Right cardiac atrium (tissue), 5 donors: ENCODE measurements at regions of chr12 and their contacts with region 1.

Region 1: GRCh38 chr12:109182041-109182839 is 65.9 kb downstream of the ACACB start:
- DNase-seq: no peak
- ATAC-seq: no peak
- H3K4me3 ChIP-seq: no peak overlapping the region
- H3K27ac ChIP-seq: no peak overlapping the region
- H3K4me1 ChIP-seq: no peaks in the 10 kb centered on the region
- H3K27me3 ChIP-seq: no peaks in the 10 kb centered on the region

Region 2: DNA sequence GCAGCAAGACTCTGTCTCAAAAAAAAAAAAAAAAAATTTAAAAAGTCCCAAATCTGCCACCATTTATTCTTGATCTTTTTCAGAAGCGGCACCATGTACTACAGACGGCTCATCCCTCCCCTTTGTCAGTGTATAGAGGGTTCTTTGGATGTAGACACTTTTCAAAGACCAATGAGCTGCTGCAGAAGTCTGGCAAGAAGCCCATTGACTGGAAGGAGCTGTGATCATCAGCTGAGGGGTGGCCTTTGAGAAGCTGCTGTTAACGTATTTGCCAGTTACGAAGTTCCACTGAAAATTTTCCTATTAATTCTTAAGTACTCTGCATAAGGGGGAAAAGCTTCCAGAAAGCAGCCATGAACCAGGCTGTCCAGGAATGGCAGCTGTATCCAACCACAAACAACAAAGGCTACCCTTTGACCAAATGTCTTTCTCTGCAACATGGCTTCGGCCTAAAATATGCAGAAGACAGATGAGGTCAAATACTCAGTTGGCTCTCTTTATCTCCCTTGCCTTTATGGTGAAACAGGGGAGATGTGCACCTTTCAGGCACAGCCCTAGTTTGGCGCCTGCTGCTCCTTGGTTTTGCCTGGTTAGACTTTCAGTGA is 72.4 kb before region 1 on chr12:
- intact Hi-C with region 1: no loop called
- DNase-seq: no peak
- ATAC-seq: no peak
- H3K4me3 ChIP-seq: no peak overlapping the region
- H3K27ac ChIP-seq: peak overlapping the region; percentile 71
- H3K4me1 ChIP-seq: peaks cover 7% of the 10 kb centered on the region
- H3K27me3 ChIP-seq: no peaks in the 10 kb centered on the region

Region 3: DNA sequence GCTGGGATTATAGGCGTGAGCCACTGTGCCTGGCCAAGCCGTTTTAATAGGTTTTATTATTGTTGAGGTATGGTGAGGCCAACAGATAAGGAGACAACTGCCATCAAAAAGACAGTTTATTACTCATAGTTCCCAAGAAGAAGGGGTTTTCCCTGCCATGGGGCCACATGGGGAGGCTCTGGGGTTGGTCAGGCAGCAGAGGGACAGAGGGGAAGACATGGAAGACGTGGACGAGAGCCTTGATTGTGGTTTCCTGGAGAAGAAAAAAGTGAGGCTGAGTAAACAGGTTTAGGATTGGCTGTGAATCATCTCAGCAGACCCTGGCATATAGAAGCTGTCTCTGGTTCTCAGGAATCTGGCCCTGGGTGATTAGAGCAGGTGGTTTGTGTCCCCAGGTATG is 56.9 kb after region 1 on chr12:
- intact Hi-C with region 1: loop called in 2 of 4 experiments (anchors 10 kb)
- DNase-seq: no peak
- ATAC-seq: no peak
- H3K4me3 ChIP-seq: no peak overlapping the region
- H3K27ac ChIP-seq: no peak overlapping the region
- H3K4me1 ChIP-seq: no peaks in the 10 kb centered on the region
- H3K27me3 ChIP-seq: no peaks in the 10 kb centered on the region